Dendritic cell treated with granulocyte-macrophage colony-stimulating factor and Interleukin-4, amounts not matched to agents 40 ng/mL and 50 ng/mL, for 4 days (primary cell): ENCODE measurements at regions of chr2 and their contacts with region 1.

Region 1: DNA sequence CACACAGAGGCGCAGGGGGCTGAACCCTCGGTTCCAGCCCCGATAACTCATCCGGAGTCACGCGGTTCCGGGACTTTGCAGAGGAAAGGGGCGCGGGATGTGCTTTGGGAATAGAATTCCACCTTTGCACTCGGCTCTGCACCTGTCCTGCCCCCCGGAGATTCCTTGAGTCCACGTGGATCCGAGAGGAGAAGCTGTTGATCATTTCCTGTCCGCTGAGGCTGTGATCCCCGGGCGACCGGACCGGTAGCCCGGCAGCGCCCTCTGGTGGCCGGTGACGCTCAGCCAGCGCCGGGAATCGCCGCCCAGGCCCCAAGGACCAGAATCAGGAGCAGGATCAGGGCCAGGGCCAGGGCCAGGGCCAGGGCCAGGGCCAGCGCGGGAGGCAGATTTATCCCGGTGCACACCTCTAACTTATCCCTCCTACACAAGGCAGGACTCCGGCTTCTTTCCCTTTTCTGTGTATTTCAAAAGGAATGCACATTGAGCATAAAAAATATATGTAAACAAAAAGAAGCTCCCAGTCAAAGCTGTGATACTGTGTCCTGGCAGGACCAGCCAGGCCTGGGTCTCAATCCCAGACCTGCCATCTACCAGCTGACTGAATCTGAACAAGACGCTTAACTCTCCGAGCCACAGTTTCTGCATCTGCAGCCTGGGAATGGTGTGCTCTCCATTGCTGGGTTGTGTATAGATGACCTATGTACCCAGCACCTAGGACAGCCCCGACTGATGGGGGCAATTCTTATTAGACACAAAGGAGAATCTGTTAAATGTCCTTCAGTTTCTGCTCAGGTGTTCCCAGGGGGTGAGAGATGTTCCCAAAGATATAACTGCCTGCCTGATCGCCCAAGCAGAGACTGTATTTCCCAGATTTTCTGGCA is 8.5 kb upstream of the SPATA3 start:
- H3K4me3 Mint-ChIP-seq: peak overlapping the region; percentile 45
- H3K27ac Mint-ChIP-seq: no peak overlapping the region
- H3K4me1 Mint-ChIP-seq: peaks cover 21% of the 10 kb centered on the region
- H3K27me3 Mint-ChIP-seq: peaks cover 41% of the 10 kb centered on the region

Region 2: DNA sequence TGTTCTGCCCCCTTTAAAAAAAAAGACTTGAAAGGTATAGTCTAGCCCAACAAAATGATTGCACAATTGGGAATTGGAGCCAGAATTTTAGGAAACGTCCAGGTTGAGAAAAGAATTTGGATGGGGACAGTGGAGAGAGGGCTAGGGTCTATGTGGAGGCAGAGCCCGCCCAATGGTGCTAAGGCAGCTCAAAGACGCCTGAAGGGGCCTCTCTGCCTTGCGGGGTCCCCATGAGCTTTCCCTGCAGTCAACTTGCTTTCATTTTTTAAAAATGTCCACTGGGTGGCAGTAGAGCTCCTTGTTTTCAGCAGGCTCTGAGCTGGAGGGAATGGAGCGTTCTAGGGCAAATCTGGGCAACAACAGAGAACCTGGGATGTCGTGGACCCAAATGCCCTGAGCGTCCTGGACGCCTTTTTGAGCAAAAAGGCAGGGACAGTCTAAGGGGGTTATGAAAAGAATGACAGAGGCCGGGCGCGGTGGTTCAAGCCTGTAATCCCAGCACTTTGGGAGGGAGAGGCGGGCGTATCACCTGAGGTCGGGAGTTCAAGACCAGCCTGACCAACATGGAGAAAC is 162.9 kb before region 1 on chr2:
- intact Hi-C with region 1: loop called (anchors 5 kb)
- H3K4me3 Mint-ChIP-seq: peak overlapping the region; percentile 55
- H3K27ac Mint-ChIP-seq: no peak overlapping the region
- H3K4me1 Mint-ChIP-seq: peaks cover 7% of the 10 kb centered on the region
- H3K27me3 Mint-ChIP-seq: peaks cover 44% of the 10 kb centered on the region

Region 3: DNA sequence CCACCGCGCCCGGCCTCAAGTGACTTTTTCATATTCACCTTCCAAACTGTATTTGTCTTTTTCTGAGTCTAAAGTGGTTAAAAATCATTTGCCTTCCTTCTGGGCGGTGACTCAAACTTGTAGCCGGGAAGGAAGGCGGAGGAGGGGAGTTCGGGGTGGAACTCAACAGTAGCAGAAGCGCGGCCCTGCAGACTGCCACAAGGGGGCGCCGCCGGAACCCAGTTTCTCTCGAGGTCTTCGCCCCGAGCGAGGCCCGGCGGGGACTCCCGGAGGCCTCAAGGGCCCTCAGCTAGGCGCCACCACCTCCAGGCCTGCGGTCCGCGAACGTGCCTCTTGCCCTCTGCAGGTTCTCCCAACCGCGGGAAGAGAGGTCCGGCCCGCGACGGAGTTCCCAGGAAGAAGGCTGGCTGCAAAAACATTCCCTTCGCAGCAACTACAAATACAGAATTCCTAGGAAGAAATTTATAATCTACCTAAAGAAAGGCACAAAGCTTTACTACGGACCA is 139.4 kb before region 1 on chr2:
- intact Hi-C with region 1: loop called (anchors 5 kb)
- H3K4me3 Mint-ChIP-seq: no peak overlapping the region
- H3K27ac Mint-ChIP-seq: no peak overlapping the region
- H3K4me1 Mint-ChIP-seq: peaks cover 7% of the 10 kb centered on the region
- H3K27me3 Mint-ChIP-seq: peaks cover 39% of the 10 kb centered on the region

Region 4: GRCh38 chr2:230902180-230902899 is 85.0 kb before region 1 on chr2:
- intact Hi-C with region 1: loop called (anchors 1 kb)
- H3K4me3 Mint-ChIP-seq: no peak overlapping the region
- H3K27ac Mint-ChIP-seq: no peak overlapping the region
- H3K4me1 Mint-ChIP-seq: peaks cover 16% of the 10 kb centered on the region
- H3K27me3 Mint-ChIP-seq: peaks cover 13% of the 10 kb centered on the region

Region 5: DNA sequence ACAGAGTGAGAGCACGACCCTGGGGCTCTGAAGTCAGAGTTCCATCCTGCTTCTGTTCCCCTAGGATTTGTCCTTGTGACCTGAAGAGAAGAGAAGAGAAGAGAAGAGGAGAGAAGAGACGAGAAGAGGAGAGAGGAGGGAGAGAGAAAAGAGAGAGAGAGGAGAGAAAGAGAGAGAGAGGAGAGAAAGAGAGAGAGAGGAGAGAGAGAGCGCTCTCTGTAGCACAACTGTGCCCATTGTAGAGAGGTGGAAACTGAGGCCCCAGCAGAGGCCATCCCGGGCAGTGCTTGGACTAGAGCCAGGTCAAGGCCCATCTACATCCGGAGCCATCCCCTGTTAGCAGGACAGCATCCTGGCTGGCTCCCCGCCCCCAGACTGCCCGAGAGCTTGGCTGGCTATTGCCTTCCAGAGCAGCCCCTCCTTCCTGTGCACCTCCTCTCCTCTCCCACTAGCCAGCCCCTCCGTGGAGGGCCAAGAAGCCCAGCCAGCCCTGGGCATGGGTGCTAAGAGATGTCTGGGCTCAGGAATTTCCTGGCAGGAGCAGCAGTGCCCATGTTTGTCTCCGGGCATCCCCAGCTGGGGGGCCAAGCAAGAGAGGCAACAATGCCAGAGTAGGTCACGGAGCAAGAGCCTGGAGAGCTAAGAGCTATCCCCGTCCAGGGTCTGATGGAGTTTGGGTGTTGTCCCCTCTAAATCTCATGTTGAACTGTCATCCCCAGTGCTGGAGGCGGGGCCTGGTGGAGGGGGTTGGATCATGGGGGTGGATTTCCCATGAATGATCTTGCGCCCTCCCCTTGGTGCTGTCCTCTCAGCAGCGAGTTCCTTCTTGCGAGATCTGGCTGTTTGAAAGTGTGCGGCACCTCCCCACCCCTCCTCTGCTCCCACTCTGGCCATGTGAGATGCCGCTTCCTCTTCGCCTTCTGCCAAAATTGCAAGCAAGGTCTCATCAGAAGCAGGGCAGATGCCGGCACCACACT is 44.2 kb before region 1 on chr2:
- intact Hi-C with region 1: loop called (anchors 5 kb)
- H3K4me3 Mint-ChIP-seq: peak overlapping the region; percentile 73
- H3K27ac Mint-ChIP-seq: peak overlapping the region; percentile 86
- H3K4me1 Mint-ChIP-seq: peaks cover 72% of the 10 kb centered on the region
- H3K27me3 Mint-ChIP-seq: peaks cover 5% of the 10 kb centered on the region

Region 6: DNA sequence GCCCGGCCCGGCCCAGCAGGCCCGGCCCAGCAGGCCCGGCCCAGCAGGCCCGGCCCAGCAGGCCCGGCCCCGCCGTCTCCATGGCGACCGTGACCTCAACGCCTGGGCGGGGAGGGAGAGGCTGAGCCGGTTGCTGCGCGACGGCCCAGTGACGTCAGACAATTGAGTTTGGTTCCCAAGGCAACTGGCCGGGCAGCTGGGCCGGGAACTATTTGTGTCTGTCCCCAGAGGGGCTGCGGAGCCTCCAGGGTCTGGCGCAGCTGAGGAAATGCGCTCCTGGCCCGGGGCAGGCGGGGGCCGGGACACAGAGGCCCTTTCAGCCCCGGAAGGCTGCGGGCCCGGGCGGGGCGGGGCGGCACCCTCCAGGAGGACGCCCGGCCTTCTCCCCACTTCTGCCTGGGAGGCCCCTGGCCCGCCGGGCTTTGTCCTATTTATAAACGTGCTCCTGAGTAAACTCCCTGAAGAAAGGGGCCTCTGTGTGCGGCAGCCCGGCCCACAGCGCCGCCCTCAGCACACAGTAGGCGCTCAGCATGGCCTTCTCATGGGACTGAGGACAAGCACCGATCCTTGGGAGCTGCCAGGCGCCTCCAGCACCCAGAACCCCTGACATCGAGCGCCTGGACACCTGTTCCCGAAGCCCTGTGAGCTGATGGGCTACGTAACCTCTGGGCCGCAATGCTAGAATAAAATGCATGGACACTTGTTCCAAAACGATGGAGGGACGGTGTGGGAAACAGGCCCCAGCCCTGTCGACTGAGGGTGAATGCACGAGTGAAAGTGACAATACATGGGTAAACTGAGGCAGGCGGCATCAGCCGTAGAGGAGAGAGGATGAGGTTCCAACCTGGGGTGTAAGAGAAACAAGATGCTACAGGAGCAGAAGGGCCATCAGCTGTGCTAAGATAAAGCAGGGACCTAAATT is 617.6 kb after region 1 on chr2:
- intact Hi-C with region 1: no loop called
- H3K4me3 Mint-ChIP-seq: peak overlapping the region; percentile 54
- H3K27ac Mint-ChIP-seq: peak overlapping the region; percentile 79
- H3K4me1 Mint-ChIP-seq: peaks cover 29% of the 10 kb centered on the region
- H3K27me3 Mint-ChIP-seq: peaks cover 23% of the 10 kb centered on the region